Sciatic nerve (tissue), 2 donors: ENCODE measurements at regions of chr6 and their contacts with region 1.

Region 1: GRCh38 chr6:71602385-71603007 is 283.9 kb upstream of the RIMS1 start:
- DNase-seq: no peak
- ATAC-seq: no peak

Region 2: DNA sequence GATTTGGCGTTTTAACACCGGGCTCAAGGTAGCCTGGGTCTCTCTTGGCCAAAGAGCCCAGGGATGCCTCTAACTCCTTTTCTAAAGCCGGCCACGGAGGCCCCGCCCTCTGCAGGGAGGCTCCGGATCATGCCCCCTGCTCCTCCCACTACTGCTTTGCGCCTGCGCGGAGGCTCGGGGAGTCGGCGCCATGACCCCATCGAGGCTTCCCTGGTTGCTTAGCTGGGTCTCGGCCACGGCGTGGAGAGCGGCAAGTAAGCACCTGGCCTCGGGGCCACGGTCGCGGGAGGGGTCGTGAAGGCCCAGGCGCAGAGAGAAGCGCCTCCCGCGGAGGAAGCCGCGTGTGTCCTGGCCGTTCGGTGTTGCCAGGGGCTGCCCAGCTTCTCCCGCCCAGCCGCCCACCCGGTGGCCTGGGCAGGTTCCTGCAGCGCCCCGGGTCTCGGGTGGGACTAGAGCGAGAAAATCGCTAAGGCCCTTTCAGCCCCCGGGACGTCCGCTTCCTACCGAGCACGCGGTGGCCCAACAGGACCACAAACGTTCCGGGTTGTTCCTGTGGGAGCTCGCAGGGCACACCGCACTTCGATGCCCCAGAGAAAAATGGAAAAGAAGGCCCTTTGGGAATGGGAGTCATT is 1035.6 kb before region 1 on chr6 and contains the start of gene SDHAF4:
- intact Hi-C with region 1: no loop called
- DNase-seq: peak; percentile 95
- ATAC-seq: peak; percentile 100
- total RNA-seq, gene SDHAF4: 8.6 TPM

Region 3: DNA sequence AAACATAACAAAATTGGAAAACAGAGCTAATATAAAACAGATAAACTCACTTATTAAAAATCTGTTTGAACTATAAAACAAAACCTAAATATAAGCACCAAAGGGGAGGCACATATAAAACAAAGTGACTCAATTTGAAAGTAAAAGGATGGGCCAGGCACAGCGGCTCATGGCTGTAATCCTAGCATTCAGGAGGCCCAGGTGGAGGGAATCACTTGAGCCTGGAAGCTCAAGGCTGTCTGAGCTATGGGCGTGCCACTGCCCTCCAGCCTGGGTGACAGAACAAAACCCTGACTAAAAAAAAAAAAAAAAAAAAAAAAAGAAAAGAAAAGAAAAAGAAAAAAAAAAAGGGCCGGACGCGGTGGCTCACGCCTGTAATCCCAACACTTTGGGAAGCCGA is 965.9 kb before region 1 on chr6:
- intact Hi-C with region 1: loop called (anchors 5 kb)
- DNase-seq: no peak
- ATAC-seq: no peak

Region 4: DNA sequence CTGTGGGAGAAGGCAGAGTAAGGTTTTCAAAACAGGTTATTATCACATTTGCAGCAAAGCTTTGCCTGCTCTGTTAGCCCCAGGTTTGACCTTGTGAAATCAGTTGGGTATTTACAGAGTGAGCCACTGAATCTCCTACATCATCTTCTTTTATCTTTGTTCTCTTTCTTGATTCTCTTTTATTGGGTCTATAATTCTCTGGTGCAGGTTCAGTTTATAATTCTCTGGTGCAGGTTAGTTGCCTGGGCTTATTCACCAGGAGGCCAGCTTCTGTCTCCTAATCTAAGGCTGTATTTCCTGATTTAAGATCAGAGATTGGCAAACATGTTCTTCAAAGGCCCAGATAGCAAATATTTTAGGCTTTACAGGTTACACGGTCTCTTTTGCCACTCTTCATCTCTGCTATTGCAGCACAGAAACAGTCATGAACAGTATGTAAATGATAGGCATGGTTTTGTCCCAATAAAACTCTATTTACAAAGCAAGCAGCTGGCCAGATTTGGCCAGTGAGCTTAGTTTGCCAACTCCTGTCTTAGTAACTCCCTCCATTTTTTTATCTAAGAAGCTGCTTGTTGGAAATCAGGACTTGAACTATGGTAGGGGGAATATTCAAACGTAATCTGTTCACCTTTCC is 78.9 kb after region 1 on chr6:
- intact Hi-C with region 1: no loop called
- DNase-seq: no peak
- ATAC-seq: no peak

Region 5: GRCh38 chr6:72464791-72465691 is 862.5 kb after region 1 on chr6:
- intact Hi-C with region 1: no loop called
- DNase-seq: no peak
- ATAC-seq: peak; percentile 63

Region 6: GRCh38 chr6:72657407-72658197 is 1055.1 kb after region 1 on chr6:
- intact Hi-C with region 1: no loop called
- DNase-seq: no peak
- ATAC-seq: no peak